ENCODE measurements at regions of chrX and their contacts with region 1.

Region 1: DNA sequence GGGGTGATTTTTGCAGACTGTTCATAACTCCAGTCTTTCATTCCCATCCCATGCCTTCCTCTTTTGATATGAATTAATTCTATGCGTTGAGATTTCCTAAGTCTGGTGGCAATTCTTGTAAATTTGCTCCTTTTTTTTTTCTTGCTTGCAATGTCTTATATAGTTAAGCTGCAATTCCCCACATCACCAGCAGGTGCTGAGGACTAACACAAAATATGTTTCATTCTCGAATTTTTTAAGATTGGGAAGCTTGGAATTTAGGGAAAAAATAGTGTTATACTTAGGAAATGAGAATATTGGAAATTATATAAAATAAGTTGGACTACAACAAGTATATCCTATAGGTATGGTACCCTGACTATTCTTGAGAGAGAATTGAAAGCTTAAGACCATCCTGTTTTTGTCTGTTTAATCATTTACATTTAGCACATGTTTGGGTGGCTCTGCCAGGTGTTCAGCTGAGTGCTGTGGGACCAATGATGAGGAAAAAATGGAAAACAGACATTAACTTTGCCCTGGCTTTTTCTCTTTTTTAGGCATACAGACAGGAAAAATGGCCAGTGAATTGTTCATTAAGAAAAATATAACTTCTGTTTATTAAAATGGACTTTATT is 30.2 kb downstream of the AFF2 start:
- DNase-seq: no peak
- CTCF ChIP-seq: peak; percentile 29

Region 2: GRCh38 chrX:148552775-148553174 is 22.2 kb after region 1 on chrX:
- CTCF ChIA-PET with region 1: interaction called, 15 read pairs
- POLR2A ChIA-PET with region 1: no interaction called
- DNase-seq: no peak
- CTCF ChIP-seq: no peak

Region 3: GRCh38 chrX:148691456-148691855 is 160.9 kb after region 1 on chrX:
- CTCF ChIA-PET with region 1: no interaction called
- POLR2A ChIA-PET with region 1: no interaction called
- DNase-seq: no peak
- CTCF ChIP-seq: no peak